Activated naive CD4-positive, alpha-beta T cell treated with anti-CD3 and anti-CD28 coated beads for 36 hours (primary cell): ENCODE measurements at regions of chr17 and their contacts with region 1.

Region 1: GRCh38 chr17:49434821-49435670 is 20.4 kb upstream of the PHB1 start:
- DNase-seq: peak; percentile 58
- H3K4me3 Mint-ChIP-seq: no peak overlapping the region
- H3K27ac Mint-ChIP-seq: no peak overlapping the region
- H3K4me1 Mint-ChIP-seq: no peaks in the 10 kb centered on the region
- H3K27me3 Mint-ChIP-seq: peaks cover 14% of the 10 kb centered on the region

Region 2: GRCh38 chr17:49407981-49408501 is 27.0 kb before region 1 on chr17:
- CTCF ChIA-PET with region 1: interaction called, 11 read pairs
- intact Hi-C with region 1: no loop called
- DNase-seq: peak; percentile 91
- H3K4me3 Mint-ChIP-seq: no peak overlapping the region
- H3K27ac Mint-ChIP-seq: no peak overlapping the region
- H3K4me1 Mint-ChIP-seq: peaks cover 29% of the 10 kb centered on the region
- H3K27me3 Mint-ChIP-seq: no peaks in the 10 kb centered on the region

Region 3: GRCh38 chr17:49425004-49425286 is 10.1 kb before region 1 on chr17:
- CTCF ChIA-PET with region 1: interaction called, 10 read pairs
- intact Hi-C with region 1: no loop called
- DNase-seq: no peak
- H3K4me3 Mint-ChIP-seq: no peak overlapping the region
- H3K27ac Mint-ChIP-seq: no peak overlapping the region
- H3K4me1 Mint-ChIP-seq: no peaks in the 10 kb centered on the region
- H3K27me3 Mint-ChIP-seq: peaks cover 2% of the 10 kb centered on the region

Region 4: DNA sequence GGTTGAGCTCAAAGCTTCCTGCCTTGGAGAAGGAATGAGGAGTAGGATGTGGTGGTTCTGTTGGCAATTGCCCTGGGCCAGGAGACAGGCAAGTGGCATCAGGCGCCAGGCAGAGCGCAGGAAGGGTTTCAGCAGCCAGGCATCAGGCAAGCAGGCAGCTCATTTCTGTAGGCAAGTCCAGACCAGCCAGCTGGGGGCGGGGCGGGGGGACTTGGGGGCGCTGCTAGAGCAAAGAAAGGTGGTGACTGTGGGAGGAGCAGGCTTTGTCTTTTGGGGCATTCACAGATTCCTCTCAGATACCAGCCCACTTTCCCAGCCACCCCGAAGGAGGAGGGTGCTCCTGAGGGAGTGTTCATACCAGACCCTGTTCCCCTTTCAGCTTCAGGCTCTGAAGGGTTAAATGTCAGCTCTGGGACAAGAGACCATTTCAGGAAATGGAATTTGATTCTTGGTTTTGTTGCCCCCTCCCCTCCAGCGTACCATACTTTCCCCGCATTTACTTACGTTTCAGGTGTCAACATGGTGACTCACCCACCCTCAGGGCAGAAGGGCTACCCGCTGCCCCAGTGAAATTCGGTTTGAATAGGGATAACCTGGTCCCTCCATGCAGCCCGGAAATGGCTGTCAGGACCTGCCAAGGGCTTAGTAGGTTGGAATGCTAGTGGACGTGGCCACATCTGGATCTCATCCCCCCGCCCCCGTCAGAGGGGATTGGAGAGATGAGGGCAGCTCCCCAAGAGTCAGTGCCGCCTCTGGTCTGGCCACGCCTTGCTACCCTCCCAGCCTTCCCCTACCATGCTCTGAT is 73.2 kb after region 1 on chr17:
- CTCF ChIA-PET with region 1: no interaction called
- intact Hi-C with region 1: no loop called
- DNase-seq: no peak
- H3K4me3 Mint-ChIP-seq: no peak overlapping the region
- H3K27ac Mint-ChIP-seq: no peak overlapping the region
- H3K4me1 Mint-ChIP-seq: no peaks in the 10 kb centered on the region
- H3K27me3 Mint-ChIP-seq: peaks cover 41% of the 10 kb centered on the region